ENCODE measurements at regions of chr1 and their contacts with region 1.

Region 1: DNA sequence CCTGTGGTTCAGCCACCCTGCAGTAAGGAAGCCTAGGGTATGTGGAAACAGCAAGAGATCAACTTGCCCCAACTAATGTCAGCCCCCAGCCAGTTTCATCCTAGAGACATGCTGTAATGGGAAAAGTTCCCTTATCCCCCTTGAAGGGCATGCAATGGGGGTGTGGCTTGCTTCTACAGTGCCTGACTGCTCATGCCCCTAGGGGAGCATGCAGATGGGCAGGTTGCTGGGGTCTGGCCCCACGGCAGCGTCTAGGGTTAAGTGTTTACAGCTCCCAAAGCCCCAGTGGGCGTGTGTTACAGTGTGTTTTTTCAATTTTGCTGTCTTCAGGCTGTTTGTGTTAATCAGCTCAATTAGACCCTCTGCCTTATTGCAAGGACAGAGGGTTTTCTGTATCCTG is 1105.9 kb downstream of the AMY1C start:
- DNase-seq: no peak
- H3K4me3 Mint-ChIP-seq: no peak overlapping the region
- H3K27ac Mint-ChIP-seq: no peak overlapping the region
- H3K4me1 Mint-ChIP-seq: no peaks in the 10 kb centered on the region
- H3K27me3 Mint-ChIP-seq: no peaks in the 10 kb centered on the region

Region 2: DNA sequence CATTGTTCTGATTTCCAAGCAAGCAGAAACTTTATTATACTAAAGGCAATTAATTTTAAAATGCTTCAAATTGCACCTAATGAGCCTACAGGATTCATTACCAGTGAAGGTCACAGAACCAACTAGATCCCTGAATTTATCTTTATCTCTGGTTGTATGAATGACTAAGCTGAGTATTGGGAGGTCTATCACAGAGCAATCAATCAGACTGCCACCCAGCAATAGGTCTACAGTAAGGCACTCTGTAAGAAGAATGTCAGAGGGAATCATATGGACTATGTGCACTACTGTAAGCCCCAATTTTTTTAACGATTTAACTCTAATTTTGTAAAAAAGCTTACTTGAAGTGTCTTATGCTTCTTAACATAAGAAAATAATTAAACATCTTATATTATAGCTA is 398.8 kb before region 1 on chr1:
- intact Hi-C with region 1: loop called (anchors 5 kb)
- DNase-seq: no peak
- H3K4me3 Mint-ChIP-seq: no peak overlapping the region
- H3K27ac Mint-ChIP-seq: no peak overlapping the region
- H3K4me1 Mint-ChIP-seq: no peaks in the 10 kb centered on the region
- H3K27me3 Mint-ChIP-seq: no peaks in the 10 kb centered on the region

Region 3: GRCh38 chr1:104720741-104721140 is 134.8 kb before region 1 on chr1:
- intact Hi-C with region 1: no loop called
- DNase-seq: no peak
- H3K4me3 Mint-ChIP-seq: no peak overlapping the region
- H3K27ac Mint-ChIP-seq: no peak overlapping the region
- H3K4me1 Mint-ChIP-seq: no peaks in the 10 kb centered on the region
- H3K27me3 Mint-ChIP-seq: no peaks in the 10 kb centered on the region

Region 4: GRCh38 chr1:104921525-104921924 is 66.0 kb after region 1 on chr1:
- intact Hi-C with region 1: no loop called
- DNase-seq: no peak
- H3K4me3 Mint-ChIP-seq: no peak overlapping the region
- H3K27ac Mint-ChIP-seq: no peak overlapping the region
- H3K4me1 Mint-ChIP-seq: no peaks in the 10 kb centered on the region
- H3K27me3 Mint-ChIP-seq: no peaks in the 10 kb centered on the region

Measured in activated T-helper 2 cell treated with anti-CD3 and anti-CD28 coated beads, Interferon-gamma antibody, Interleukin-2, Interleukin-4, amounts not matched to agents 10 μg/mL and 5 μg/mL and 100 μg/mL, durations not matched to agents 14 hours and 24 hours and 36 hours (primary cell).